GM12878 (cell line): ENCODE measurements at regions of chr1 and their contacts with region 1.

Region 1: GRCh38 chr1:203299169-203299568 is 6.2 kb upstream of the BTG2 start:
- DNase-seq: no peak
- ATAC-seq: peak; percentile 72
- H3K4me3 ChIP-seq: peak overlapping the region; percentile 43; the same call in 1 of the 2 replicates
- H3K27ac ChIP-seq: peak overlapping the region; percentile 80
- H3K4me1 ChIP-seq: peaks cover 55% of the 10 kb centered on the region
- H3K27me3 ChIP-seq: no peaks in the 10 kb centered on the region
- CTCF ChIP-seq: no peak
- EP300 ChIP-seq: 0 out of 4 replicates have a peak, but pooled peaks of 1 of the 2 experiments have one; percentile 13
- POLR2A ChIP-seq: no peak; the same call in 1 of the 2 replicates
- RAD21 ChIP-seq: no peak

Region 2: DNA sequence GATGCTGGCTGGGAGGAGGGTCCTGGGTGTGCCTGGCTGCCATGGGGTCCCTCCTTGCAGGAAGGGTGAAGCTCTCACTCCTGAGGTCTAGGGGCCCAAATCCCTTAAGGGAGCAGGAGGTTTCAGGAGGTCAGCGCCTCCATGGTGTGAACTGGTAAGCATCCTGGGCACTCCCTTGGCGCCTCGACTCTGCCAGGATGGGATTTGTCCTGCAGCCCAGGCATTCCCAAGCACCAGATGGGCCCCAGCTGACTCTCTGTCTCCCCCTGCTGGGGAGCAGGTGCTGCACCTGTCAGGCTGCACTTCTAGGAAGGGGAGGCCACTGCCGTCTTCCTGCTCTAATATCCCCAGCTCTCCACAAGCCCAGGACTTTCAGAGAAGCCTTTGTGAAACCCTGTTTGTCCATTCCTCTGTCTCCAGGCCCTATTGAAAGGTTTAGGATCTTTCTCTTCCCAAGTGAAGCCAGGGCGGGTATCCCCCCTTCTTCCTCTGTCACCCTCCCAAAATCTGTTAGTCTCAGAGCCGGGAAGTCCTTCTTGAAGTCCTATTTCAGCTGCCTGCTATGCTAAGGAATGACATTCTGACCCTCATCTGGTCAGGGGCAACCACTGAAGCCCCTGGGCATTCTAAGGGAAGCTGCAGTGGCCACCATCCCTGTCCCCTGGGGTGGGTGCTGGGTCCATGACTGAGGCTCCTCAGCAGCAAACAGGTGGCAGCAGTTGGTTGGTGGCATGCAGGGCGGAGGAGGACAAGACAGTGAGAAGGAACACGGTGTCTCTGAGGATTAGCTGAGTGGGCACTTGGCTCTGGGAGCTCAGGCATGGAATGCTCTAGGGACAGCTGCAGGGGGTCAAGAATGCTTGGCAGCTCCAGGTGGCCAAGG is 126.8 kb before region 1 on chr1:
- CTCF ChIA-PET with region 1: no interaction called
- POLR2A ChIA-PET with region 1: no interaction called
- RAD21 ChIA-PET with region 1: no interaction called
- SMC1A ChIA-PET with region 1: no interaction called
- in situ Hi-C with region 1: no loop called
- intact Hi-C with region 1: no loop called
- DNase-seq: no peak
- ATAC-seq: peak; percentile 65
- H3K4me3 ChIP-seq: no peak overlapping the region
- H3K27ac ChIP-seq: no peak overlapping the region
- H3K4me1 ChIP-seq: peaks cover 4% of the 10 kb centered on the region; the same call in 1 of the 2 replicates
- H3K27me3 ChIP-seq: no peaks in the 10 kb centered on the region; a peak in 2 of 4 replicates
- CTCF ChIP-seq: peak; percentile 69 to 96 (median 90)
- EP300 ChIP-seq: no peak
- POLR2A ChIP-seq: no peak
- RAD21 ChIP-seq: peak; percentile 54

Region 3: DNA sequence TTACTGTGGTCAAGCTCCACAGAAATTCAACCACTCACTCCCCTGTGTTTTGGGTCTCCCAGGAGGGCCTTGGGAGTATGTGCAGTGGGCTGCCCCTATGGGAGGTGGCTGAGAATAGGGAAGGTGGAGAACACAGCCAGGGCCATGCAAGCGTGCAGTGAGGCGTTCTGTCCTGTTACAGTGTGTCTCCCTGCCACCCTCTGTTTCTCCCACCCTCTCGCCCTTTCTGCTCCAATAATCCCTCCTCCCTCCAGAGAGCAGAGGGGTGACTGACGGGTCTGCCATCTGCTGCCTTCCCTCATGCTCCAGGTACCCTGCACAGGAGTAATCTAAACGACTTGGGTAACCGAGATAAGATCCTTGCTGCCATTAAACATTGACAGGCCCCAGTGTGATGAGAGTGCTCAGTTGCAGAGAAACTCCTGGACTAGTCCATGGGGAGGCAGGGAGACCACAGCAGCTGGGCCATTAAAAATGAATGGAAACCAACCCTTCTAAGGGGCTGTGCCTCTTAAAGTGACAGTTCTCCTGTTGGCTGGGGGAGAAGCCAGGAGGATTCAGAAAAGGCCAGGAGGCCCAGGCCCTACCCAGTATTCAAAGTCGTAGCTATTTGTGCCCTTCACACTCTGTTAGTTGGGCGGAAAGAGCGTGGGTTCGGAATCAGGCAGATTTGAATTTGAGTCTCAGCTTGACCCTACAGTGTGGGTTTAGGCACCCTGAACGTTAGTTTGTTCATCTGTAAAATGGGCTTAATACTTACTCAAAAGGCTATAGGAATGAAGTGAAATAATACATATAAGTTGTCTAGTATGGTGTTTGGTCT is 16.2 kb before region 1 on chr1:
- CTCF ChIA-PET with region 1: interaction called, 70 read pairs
- POLR2A ChIA-PET with region 1: interaction called, 146 read pairs
- RAD21 ChIA-PET with region 1: interaction called, 8 read pairs
- SMC1A ChIA-PET with region 1: no interaction called
- in situ Hi-C with region 1: no loop called
- intact Hi-C with region 1: no loop called
- DNase-seq: no peak
- ATAC-seq: peak; percentile 28
- H3K4me3 ChIP-seq: peak overlapping the region; percentile 13; the same call in 1 of the 2 replicates
- H3K27ac ChIP-seq: peak overlapping the region; percentile 67
- H3K4me1 ChIP-seq: peaks cover 52% of the 10 kb centered on the region
- H3K27me3 ChIP-seq: no peaks in the 10 kb centered on the region
- CTCF ChIP-seq: no peak
- EP300 ChIP-seq: no peak
- POLR2A ChIP-seq: no peak
- RAD21 ChIP-seq: no peak

Region 4: GRCh38 chr1:203311368-203312301 is 12.5 kb after region 1 on chr1:
- CTCF ChIA-PET with region 1: interaction called, 6 read pairs
- POLR2A ChIA-PET with region 1: interaction called, 51 read pairs
- RAD21 ChIA-PET with region 1: interaction called, 470 read pairs
- SMC1A ChIA-PET with region 1: interaction called, 15 read pairs
- in situ Hi-C with region 1: no loop called
- intact Hi-C with region 1: no loop called
- DNase-seq: no peak
- ATAC-seq: peak; percentile 22
- H3K4me3 ChIP-seq: no peak overlapping the region
- H3K27ac ChIP-seq: 0 out of 2 replicates have a peak overlapping the region, but pooled peaks have one; percentile 10
- H3K4me1 ChIP-seq: peaks cover 19% of the 10 kb centered on the region
- H3K27me3 ChIP-seq: no peaks in the 10 kb centered on the region
- CTCF ChIP-seq: no peak
- EP300 ChIP-seq: no peak
- POLR2A ChIP-seq: no peak
- RAD21 ChIP-seq: no peak

Region 5: DNA sequence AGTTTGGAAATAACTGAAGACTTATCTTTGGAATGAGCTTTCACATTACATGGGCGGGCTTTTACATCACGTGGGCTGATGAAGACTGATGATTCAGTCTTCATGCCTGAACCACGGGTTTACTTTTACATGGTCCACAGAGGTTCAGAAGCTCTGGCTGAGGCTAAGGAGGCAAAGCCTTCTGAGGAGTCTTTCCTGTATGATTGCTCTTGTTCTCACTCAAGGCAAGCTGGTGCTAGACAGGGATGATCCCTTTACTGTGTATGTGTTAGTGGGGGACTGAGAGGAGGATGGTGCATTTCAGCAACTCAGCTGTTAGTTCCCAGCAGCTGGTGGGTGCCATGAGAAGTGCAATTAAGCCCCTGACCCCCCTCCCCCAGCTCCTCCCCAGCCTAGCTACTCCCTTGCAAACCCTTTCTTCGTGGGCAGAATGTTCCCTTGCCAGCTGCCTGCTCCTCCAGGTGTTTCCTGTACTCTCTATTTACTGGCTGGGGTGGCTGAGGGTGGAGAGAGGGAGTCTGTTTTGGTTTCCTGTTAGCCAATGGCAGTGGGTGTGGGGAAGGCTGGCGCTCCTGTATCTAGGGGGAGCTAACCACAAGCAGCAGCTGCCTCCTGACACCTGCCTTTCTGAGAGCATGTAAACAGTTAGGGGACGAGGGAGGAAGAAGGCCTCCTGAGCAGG is 21.6 kb after region 1 on chr1:
- CTCF ChIA-PET with region 1: interaction called, 33 read pairs
- POLR2A ChIA-PET with region 1: interaction called, 395 read pairs
- RAD21 ChIA-PET with region 1: interaction called, 541 read pairs
- SMC1A ChIA-PET with region 1: interaction called, 590 read pairs
- in situ Hi-C with region 1: no loop called
- intact Hi-C with region 1: no loop called
- DNase-seq: no peak
- ATAC-seq: peak; percentile 68
- H3K4me3 ChIP-seq: no peak overlapping the region; the same call in 1 of the 2 replicates
- H3K27ac ChIP-seq: peak overlapping the region; percentile 70
- H3K4me1 ChIP-seq: peaks cover 56% of the 10 kb centered on the region
- H3K27me3 ChIP-seq: no peaks in the 10 kb centered on the region
- CTCF ChIP-seq: no peak
- EP300 ChIP-seq: peak; percentile 47 to 89; a peak in 2 of 4 replicates
- POLR2A ChIP-seq: no peak; the same call in 1 of the 2 replicates
- RAD21 ChIP-seq: no peak

Region 6: GRCh38 chr1:203326830-203327683 is 27.9 kb after region 1 on chr1:
- CTCF ChIA-PET with region 1: interaction called, 33 read pairs
- POLR2A ChIA-PET with region 1: interaction called, 395 read pairs
- RAD21 ChIA-PET with region 1: interaction called, 541 read pairs
- SMC1A ChIA-PET with region 1: interaction called, 590 read pairs
- in situ Hi-C with region 1: no loop called
- intact Hi-C with region 1: no loop called
- DNase-seq: peak; percentile 88
- ATAC-seq: peak; percentile 81
- H3K4me3 ChIP-seq: peak overlapping the region; percentile 60
- H3K27ac ChIP-seq: peak overlapping the region; percentile 98
- H3K4me1 ChIP-seq: peaks cover 62% of the 10 kb centered on the region
- H3K27me3 ChIP-seq: no peaks in the 10 kb centered on the region
- CTCF ChIP-seq: peak in 2 of 3 experiments; percentile 12 to 22; a peak in 1 of 6 replicates
- EP300 ChIP-seq: peak; percentile 62 to 85; a peak in 3 of 4 replicates
- POLR2A ChIP-seq: peak; percentile 78
- RAD21 ChIP-seq: no peak